ENCODE measurements at regions of chr11 and their contacts with region 1.

Region 1: DNA sequence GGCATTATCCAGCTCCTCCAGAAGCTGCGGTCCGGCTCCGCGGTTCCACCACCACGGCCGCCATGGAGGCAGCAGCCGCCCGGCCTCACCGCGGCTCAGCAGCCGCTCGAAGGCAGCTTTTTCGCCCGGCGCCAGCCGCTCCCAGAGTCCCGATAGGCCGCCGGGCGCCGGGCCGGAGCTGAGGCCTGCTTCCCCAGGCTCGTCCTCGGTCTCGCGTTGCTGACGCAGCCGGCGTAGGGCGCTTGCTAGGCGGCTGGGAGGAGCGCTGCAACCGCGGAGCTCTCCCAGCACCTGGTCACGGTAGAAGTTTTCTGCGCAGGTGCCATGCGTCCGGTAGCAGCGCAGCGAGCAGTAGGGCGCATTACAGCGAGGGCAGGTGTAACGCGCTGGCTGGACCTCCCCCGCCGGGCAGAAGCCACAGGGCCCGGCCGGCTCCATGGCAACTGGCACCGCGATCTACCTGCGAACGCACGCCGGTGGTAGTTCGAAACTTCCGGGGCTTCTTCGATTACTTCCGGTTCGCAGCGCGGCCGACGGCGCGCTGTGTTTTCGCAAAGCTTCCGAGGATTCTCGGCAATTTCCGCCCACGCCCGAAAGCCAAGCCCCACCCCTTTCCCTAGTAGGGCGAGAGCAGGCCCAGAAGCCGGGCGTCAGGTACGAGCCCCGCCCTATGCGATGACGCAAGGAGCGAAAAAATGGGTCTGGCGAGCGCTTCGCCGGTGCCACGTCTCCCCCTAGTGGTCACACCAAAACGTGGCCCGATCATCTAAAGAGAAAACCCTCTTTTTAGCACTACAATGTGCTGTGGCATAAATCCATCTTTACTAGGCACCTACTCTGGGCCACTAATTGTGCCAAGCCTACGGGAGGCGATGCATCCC is at the start of gene ZNHIT2:
- DNase-seq: peak; percentile 98
- H3K4me3 ChIP-seq: peak within 1 kb of the TSS; percentile 74 to 82 (median 81)
- H3K27ac ChIP-seq: peak within 1 kb of the TSS; percentile 74
- H3K4me1 ChIP-seq: peaks cover 33% of the 10 kb centered on the region
- H3K27me3 ChIP-seq: no peaks in the 10 kb centered on the region
- CTCF ChIP-seq: peak; percentile 84 to 95
- total RNA-seq, gene ZNHIT2: 13.6 to 15.2 TPM

Region 2: DNA sequence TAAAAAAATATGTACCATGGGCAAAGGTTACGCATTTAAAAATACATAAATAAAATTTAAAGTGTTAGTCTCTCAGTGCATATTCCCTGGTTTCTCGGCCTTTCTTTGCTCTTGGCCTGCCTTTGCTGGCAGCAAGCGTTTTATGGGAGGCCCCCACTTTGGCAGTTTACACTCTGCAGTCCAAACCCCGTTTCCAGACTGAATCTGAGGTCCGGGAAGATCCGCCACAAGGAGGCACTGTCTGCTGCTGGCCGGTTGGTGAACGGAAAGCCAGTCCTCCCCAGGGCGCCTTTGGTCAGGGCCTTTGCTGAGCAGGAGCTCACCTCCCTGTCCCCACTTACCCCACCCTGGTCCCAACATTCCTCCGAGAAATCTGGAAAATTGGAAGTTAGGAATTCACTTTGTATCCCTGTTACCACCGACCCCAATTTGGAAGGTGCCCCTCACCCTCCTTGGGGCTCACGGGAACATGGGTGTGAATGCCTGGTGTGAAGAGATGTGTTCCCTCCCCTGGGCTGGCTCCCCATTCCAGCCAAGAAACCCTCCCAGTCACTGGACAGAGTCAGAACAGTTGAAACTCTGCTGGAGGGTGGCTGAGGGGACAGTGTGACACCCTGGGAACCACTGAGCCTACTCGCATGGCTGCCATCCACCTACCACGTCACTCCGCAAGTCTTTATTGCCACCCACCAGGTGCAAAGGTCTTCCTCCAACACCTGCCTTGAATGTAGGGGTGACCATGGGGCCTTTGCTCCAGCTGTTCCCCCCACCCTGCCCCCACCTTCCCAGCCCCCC is 329.7 kb before region 1 on chr11:
- CTCF ChIA-PET with region 1: no interaction called
- dilution Hi-C with region 1: loop called (anchors 10 kb)
- in situ Hi-C with region 1: no loop called
- intact Hi-C with region 1: loop called (anchors 1 kb)
- DNase-seq: peak; percentile 25
- H3K4me3 ChIP-seq: no peak overlapping the region
- H3K27ac ChIP-seq: no peak overlapping the region
- H3K4me1 ChIP-seq: no peaks in the 10 kb centered on the region
- H3K27me3 ChIP-seq: no peaks in the 10 kb centered on the region
- CTCF ChIP-seq: peak; percentile 81 to 92

Region 3: DNA sequence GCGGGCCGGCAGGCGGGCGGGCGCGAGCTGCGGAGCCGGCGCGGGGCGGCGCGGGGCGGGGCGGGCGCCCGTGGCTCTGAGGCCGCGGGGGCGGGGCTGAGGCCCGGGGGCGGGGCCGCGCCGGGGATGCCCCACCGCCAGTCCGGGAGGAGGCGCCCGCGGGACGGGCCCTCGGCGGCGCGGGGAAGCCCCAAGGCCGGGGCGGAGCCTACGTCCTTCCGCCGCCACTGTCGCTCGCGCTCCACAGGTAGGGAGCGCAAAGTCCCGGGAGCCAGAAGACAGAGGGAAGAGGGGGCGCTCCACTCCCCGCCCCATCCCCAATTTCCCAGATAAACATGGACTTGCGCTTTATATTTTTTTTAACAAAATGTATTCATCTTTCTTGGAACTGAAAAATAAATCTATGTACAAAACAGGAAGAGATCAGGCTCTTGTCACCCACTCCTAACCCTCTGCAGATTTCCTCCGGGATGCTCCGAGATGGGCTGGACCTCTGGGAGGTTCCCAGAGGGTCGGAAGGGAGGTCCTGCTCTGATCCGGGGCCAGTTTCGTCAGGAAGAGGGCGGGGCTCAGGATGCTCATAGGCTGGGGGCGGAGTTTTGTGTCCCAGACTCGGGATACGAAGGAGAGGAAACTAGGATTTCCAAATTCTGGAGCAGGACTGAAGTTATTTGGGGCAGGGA is 314.2 kb before region 1 on chr11 and contains the start of gene MAP4K2:
- CTCF ChIA-PET with region 1: no interaction called
- dilution Hi-C with region 1: loop called (anchors 10 kb)
- in situ Hi-C with region 1: no loop called
- intact Hi-C with region 1: no loop called
- DNase-seq: peak; percentile 77
- H3K4me3 ChIP-seq: peak within 1 kb of the TSS; percentile 56 to 78 (median 69)
- H3K27ac ChIP-seq: peak within 1 kb of the TSS; percentile 82
- H3K4me1 ChIP-seq: peaks cover 14% of the 10 kb centered on the region
- H3K27me3 ChIP-seq: no peaks in the 10 kb centered on the region
- CTCF ChIP-seq: peak in 1 of 2 donors; percentile 33
- total RNA-seq, gene MAP4K2: 15.4 to 15.5 TPM

Region 4: GRCh38 chr11:64924102-64924851 is 193.2 kb before region 1 on chr11 and contains the start of gene PPP2R5B:
- CTCF ChIA-PET with region 1: no interaction called
- dilution Hi-C with region 1: no loop called
- in situ Hi-C with region 1: no loop called
- intact Hi-C with region 1: loop called (anchors 5 kb)
- DNase-seq: peak; percentile 88
- H3K4me3 ChIP-seq: peak within 1 kb of the TSS; percentile 77 to 88 (median 78)
- H3K27ac ChIP-seq: peak within 1 kb of the TSS; percentile 70
- H3K4me1 ChIP-seq: peaks cover 10% of the 10 kb centered on the region
- H3K27me3 ChIP-seq: no peaks in the 10 kb centered on the region
- CTCF ChIP-seq: no peak
- total RNA-seq, gene PPP2R5B: 13.8 to 32.7 TPM

Region 5: DNA sequence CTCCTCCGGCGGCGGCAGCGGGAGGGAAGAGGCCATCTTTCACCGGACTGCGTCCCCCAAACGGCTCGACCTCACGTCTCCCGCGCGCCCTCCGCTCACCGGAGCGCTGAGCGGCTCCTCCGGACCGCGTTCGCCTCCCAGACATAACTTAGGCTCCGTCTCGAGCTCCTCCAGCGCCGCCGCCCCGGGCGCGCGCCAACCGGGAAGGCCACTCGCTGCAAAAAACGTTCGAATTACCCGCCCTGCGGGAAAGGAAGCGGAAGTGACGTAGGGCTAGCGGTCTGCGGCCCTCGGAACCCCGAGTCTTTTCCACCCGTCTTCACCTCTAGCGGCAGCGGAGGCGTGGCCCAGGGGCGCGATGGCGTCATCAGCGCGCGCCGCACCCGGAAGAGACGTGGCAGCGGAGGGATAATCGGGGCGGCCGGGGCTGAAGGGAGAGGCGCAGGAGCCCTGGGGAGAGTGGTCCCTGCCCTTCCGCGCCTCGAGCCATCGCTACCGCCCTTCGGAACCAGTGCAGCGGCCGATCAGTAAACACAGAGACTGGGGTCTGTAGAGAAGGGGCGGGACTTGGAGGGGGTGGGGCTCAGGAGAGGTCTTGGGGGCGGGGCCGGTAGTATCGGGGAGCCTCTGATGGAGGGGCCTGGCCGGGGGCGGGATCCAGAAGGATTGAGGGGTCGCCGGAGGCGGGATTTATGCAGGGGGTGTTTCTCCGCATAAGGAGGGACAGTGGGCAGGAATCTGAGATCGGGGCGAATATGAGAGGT is 33.4 kb before region 1 on chr11 and contains the starts of genes CDCA5 and ZFPL1:
- CTCF ChIA-PET with region 1: no interaction called
- dilution Hi-C with region 1: no loop called
- in situ Hi-C with region 1: no loop called
- intact Hi-C with region 1: loop called (anchors 2 kb)
- DNase-seq: peak; percentile 93
- H3K4me3 ChIP-seq: peak within 1 kb of the TSS; percentile 72 to 88 (median 80)
- H3K27ac ChIP-seq: peak within 1 kb of the TSS; percentile 70
- H3K4me1 ChIP-seq: peaks cover 33% of the 10 kb centered on the region
- H3K27me3 ChIP-seq: no peaks in the 10 kb centered on the region
- CTCF ChIP-seq: no peak
- total RNA-seq, gene CDCA5: 2.2 to 34.6 TPM
- total RNA-seq, gene ZFPL1: 38.0 to 40.0 TPM

Region 6: GRCh38 chr11:65134386-65135253 is 17.2 kb after region 1 on chr11 and contains the start of gene SYVN1:
- CTCF ChIA-PET with region 1: no interaction called
- dilution Hi-C with region 1: no loop called
- in situ Hi-C with region 1: no loop called
- intact Hi-C with region 1: loop called (anchors 1 kb)
- DNase-seq: peak; percentile 98
- H3K4me3 ChIP-seq: peak within 1 kb of the TSS; percentile 83 to 86 (median 85)
- H3K27ac ChIP-seq: peak within 1 kb of the TSS; percentile 97
- H3K4me1 ChIP-seq: peaks cover 15% of the 10 kb centered on the region
- H3K27me3 ChIP-seq: no peaks in the 10 kb centered on the region
- CTCF ChIP-seq: no peak
- total RNA-seq, gene SYVN1: 21.5 to 45.8 TPM

Region 7: GRCh38 chr11:65150509-65151271 is 33.2 kb after region 1 on chr11:
- CTCF ChIA-PET with region 1: no interaction called
- dilution Hi-C with region 1: no loop called
- in situ Hi-C with region 1: no loop called
- intact Hi-C with region 1: no loop called
- DNase-seq: peak; percentile 93
- H3K4me3 ChIP-seq: peak overlapping the region in 1 of 3 experiments; percentile 11
- H3K27ac ChIP-seq: peak overlapping the region; percentile 70
- H3K4me1 ChIP-seq: peaks cover 18% of the 10 kb centered on the region
- H3K27me3 ChIP-seq: no peaks in the 10 kb centered on the region
- CTCF ChIP-seq: peak in 1 of 2 donors; percentile 15